ENCODE measurements at regions of chrX and their contacts with region 1.

Region 1: GRCh38 chrX:102768987-102769761 is 48.6 kb downstream of the GPRASP3 start:
- DNase-seq: peak; percentile 57
- ATAC-seq: peak; percentile 90
- H3K4me3 Mint-ChIP-seq: peak overlapping the region; percentile 98
- H3K27ac Mint-ChIP-seq: peak overlapping the region; percentile 92
- H3K4me1 Mint-ChIP-seq: peaks cover 13% of the 10 kb centered on the region
- H3K27me3 Mint-ChIP-seq: no peaks in the 10 kb centered on the region
- CTCF ChIP-seq: no peak

Region 2: DNA sequence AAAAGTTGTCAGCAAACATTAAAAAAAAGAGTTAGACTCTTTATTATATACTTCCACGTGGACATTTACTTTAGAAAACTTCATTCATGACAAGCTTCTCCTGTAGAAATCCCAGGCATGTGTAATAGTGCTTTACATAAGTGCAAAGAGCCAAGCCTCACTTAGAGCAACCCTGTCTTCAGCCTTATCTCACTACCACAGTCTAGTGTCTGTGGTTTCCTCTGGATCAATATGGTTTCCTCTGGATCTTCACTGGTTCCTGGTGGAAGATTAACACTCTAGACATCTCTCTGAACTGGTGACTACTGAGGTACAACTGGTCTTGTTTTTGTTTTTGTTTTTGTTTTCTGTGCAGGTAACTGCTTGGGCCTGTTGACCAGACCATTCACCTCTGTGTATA is 188.3 kb before region 1 on chrX:
- CTCF ChIA-PET with region 1: no interaction called
- POLR2A ChIA-PET with region 1: no interaction called
- intact Hi-C with region 1: no loop called
- DNase-seq: no peak
- ATAC-seq: no peak
- H3K4me3 Mint-ChIP-seq: no peak overlapping the region
- H3K27ac Mint-ChIP-seq: no peak overlapping the region
- H3K4me1 Mint-ChIP-seq: no peaks in the 10 kb centered on the region
- H3K27me3 Mint-ChIP-seq: peaks cover 2% of the 10 kb centered on the region
- CTCF ChIP-seq: no peak

Region 3: GRCh38 chrX:102599084-102599950 is 169.9 kb before region 1 on chrX and contains the start of gene ARMCX5:
- CTCF ChIA-PET with region 1: no interaction called
- POLR2A ChIA-PET with region 1: no interaction called
- intact Hi-C with region 1: loop called (anchors 1 kb)
- DNase-seq: peak; percentile 31
- ATAC-seq: peak; percentile 86
- H3K4me3 Mint-ChIP-seq: peak within 1 kb of the TSS; percentile 96
- H3K27ac Mint-ChIP-seq: peak within 1 kb of the TSS; percentile 94
- H3K4me1 Mint-ChIP-seq: peaks cover 28% of the 10 kb centered on the region
- H3K27me3 Mint-ChIP-seq: no peaks in the 10 kb centered on the region
- CTCF ChIP-seq: no peak
- total RNA-seq, gene ARMCX5: 12.0 and 12.4 TPM in 2 replicates

Region 4: GRCh38 chrX:102659790-102660757 is 109.1 kb before region 1 on chrX:
- CTCF ChIA-PET with region 1: no interaction called
- POLR2A ChIA-PET with region 1: no interaction called
- intact Hi-C with region 1: loop called (anchors 5 kb)
- DNase-seq: peak; percentile 70
- ATAC-seq: peak; percentile 95
- H3K4me3 Mint-ChIP-seq: peak overlapping the region; percentile 92
- H3K27ac Mint-ChIP-seq: peak overlapping the region; percentile 92
- H3K4me1 Mint-ChIP-seq: peaks cover 17% of the 10 kb centered on the region
- H3K27me3 Mint-ChIP-seq: no peaks in the 10 kb centered on the region
- CTCF ChIP-seq: no peak

Region 5: GRCh38 chrX:102720237-102721168 is 48.7 kb before region 1 on chrX and contains the start of gene GPRASP3:
- CTCF ChIA-PET with region 1: no interaction called
- POLR2A ChIA-PET with region 1: no interaction called
- intact Hi-C with region 1: loop called (anchors 2 kb)
- DNase-seq: peak; percentile 37
- ATAC-seq: peak; percentile 85
- H3K4me3 Mint-ChIP-seq: peak within 1 kb of the TSS; percentile 88
- H3K27ac Mint-ChIP-seq: peak within 1 kb of the TSS; percentile 35
- H3K4me1 Mint-ChIP-seq: peaks cover 12% of the 10 kb centered on the region
- H3K27me3 Mint-ChIP-seq: no peaks in the 10 kb centered on the region
- CTCF ChIP-seq: no peak
- total RNA-seq, gene GPRASP3: 1.3 TPM in 2 replicates

Region 6: GRCh38 chrX:102976793-102977495 is 207.8 kb after region 1 on chrX:
- CTCF ChIA-PET with region 1: no interaction called
- POLR2A ChIA-PET with region 1: no interaction called
- intact Hi-C with region 1: no loop called
- DNase-seq: no peak
- ATAC-seq: no peak
- H3K4me3 Mint-ChIP-seq: no peak overlapping the region
- H3K27ac Mint-ChIP-seq: no peak overlapping the region
- H3K4me1 Mint-ChIP-seq: no peaks in the 10 kb centered on the region
- H3K27me3 Mint-ChIP-seq: no peaks in the 10 kb centered on the region
- CTCF ChIP-seq: no peak

Measured in activated B cell treated with CpG ODN at 0.5 μM for 24 hours (primary cell).